Activated CD4-positive, alpha-beta T cell treated with anti-CD3 and anti-CD28 coated beads for 36 hours (primary cell): ENCODE measurements at regions of chr3 and their contacts with region 1.

Region 1: DNA sequence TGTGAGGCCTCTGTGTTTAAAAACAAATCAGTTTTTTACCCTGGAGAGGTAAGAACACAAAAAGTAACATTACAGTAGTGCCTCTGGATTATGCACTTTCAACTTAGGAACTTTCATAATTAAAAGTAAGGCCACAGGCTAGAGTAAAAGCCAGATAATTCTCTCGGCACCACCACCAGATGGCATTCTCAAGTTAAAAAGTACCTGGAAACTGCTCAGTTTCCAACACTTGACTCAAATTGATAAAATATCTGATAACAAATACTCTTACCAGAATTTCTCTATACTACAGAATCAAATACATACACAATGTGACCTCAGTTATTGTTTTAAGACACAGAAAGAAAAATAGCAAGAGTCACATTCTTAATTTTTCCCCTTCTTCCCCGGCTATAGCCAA is 19.9 kb downstream of the SPICE1 start:
- DNase-seq: peak; percentile 52
- ATAC-seq: peak; percentile 66
- H3K4me3 Mint-ChIP-seq: no peak overlapping the region
- H3K27ac Mint-ChIP-seq: no peak overlapping the region
- H3K4me1 Mint-ChIP-seq: no peaks in the 10 kb centered on the region
- H3K27me3 Mint-ChIP-seq: no peaks in the 10 kb centered on the region

Region 2: DNA sequence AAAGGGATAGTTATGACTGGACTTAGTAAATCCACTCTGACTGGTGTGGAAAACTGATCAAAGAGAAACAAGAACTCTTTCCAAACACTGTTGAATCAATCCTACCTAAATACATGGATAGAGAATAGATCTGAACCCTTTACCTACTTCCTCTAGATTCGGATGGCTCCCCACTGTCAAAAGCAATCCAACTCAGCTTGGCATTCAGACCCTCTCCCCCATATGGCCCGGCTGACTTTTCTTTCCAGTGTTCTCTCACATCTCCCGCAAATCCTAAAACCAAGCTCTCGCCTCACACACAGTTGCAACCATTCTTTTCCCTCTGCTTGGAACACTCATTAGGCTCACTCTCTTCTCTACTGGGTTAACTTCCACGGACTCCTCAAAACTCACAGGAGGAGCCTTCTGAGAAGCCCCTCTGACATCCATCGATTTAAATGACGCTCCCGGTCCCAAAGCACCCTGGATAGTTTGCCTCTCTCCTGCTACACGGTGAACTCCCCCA is 19.3 kb after region 1 on chr3:
- CTCF ChIA-PET with region 1: interaction called, 19 read pairs
- POLR2A ChIA-PET with region 1: no interaction called
- intact Hi-C with region 1: no loop called
- DNase-seq: no peak
- ATAC-seq: peak; percentile 30
- H3K4me3 Mint-ChIP-seq: no peak overlapping the region
- H3K27ac Mint-ChIP-seq: no peak overlapping the region
- H3K4me1 Mint-ChIP-seq: peaks cover 10% of the 10 kb centered on the region
- H3K27me3 Mint-ChIP-seq: peaks cover 6% of the 10 kb centered on the region

Region 3: DNA sequence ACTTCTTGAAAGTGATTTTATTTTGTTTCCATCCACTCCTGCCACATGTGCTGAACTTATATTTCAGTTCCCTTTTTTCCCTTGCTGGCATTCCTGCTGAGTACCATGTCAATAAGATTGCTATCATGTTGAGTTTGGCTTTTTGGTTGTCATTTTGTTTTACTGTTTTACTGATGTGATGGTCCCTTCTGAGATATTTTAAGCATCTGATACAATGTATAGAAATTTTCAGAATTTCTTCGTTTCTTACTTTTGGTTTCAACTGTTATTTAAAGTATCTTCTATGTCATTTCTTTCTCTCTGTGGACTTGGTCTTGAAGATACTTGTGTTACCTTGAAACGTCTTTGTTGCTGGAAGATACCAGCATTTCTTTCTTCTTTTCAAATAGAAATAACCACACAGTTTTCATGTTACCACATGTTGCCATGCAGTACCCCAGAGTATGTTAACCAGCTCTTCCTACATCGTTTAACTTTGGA is 51.4 kb after region 1 on chr3:
- CTCF ChIA-PET with region 1: interaction called, 10 read pairs
- POLR2A ChIA-PET with region 1: no interaction called
- intact Hi-C with region 1: no loop called
- DNase-seq: no peak
- ATAC-seq: peak; percentile 47
- H3K4me3 Mint-ChIP-seq: peak overlapping the region; percentile 69
- H3K27ac Mint-ChIP-seq: peak overlapping the region; percentile 82
- H3K4me1 Mint-ChIP-seq: peaks cover 42% of the 10 kb centered on the region
- H3K27me3 Mint-ChIP-seq: no peaks in the 10 kb centered on the region

Region 4: DNA sequence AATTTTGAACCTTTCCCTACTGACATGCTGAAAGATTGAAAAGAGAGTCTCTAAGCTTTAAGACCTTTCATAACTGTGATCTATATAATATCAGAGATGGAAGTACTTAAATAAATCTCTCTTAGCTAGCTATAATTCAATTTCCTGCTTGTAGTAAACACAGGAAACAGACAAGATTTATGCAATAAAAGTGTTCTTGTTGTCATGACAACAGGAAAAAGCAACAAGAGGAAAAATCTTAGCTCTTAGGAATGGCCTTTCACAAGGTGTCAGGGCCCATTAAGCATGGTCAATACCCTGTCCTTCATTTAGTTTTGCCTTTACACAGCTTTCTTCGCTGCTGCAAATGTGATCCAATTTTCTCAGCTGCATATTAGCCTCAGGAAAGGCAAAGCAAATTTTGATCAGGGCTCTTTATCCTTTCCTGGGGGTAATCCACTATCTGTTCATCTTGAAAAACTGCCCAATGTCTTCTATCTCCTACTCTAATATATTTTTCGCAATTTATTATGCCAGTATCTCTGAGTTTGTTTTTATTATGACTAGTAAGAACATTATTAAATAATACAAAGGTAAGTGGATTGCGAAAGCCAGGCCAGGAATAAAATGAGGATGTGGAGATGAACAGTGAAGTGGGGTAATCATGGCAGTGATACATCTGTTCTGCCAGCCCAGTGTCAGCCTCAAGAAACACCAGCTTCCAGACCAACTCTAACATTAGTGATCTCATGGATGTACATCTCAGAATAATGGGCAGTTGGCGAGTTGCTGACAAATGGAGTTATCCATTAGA is 66.0 kb after region 1 on chr3:
- CTCF ChIA-PET with region 1: interaction called, 15 read pairs
- POLR2A ChIA-PET with region 1: no interaction called
- intact Hi-C with region 1: no loop called
- DNase-seq: no peak
- ATAC-seq: no peak
- H3K4me3 Mint-ChIP-seq: no peak overlapping the region
- H3K27ac Mint-ChIP-seq: no peak overlapping the region
- H3K4me1 Mint-ChIP-seq: peaks cover 41% of the 10 kb centered on the region
- H3K27me3 Mint-ChIP-seq: no peaks in the 10 kb centered on the region

Region 5: DNA sequence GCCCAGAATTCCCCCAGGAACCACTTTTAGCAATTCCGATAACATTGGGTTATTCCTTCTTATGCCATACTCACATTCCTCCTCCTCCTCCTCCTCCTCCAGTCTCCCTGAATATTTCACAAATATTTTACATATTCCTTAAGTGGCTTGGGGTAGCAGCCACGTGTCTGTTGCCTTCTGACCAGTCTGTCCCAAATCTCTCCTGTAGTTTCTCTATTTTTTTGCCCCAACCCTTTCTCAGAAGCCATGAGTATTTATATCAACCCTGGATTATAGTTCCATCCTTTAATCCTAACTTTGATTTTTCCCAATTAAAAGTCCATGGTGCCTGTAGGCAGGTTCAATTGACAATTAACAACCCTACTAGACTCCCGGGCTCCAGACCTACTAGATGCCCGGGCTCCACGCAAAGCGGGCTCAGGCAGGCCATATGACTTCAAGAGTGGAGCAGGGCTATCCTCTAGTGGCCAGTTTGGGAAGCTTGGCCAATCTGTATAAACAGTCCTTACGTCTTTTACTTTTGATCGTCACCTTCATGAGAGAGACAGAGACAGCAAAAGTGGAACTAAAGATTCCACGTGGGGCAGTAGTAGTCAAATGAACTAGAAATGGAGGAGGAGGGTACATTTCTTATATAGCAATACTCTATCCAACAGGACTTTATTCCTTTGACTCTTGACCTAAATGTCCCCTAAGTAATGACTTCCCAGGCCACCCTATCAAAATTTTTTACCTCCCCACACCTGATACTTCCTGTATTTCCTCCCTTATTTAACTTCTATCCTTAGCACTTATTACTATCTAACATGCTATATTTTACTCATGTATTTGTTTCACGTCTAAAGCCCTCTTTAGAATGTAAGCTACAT is 131.7 kb after region 1 on chr3:
- CTCF ChIA-PET with region 1: interaction called, 3 read pairs
- POLR2A ChIA-PET with region 1: no interaction called
- intact Hi-C with region 1: loop called in 1 of 2 experiments (anchors 2 kb)
- DNase-seq: peak; percentile 39
- ATAC-seq: peak; percentile 78
- H3K4me3 Mint-ChIP-seq: no peak overlapping the region
- H3K27ac Mint-ChIP-seq: no peak overlapping the region
- H3K4me1 Mint-ChIP-seq: no peaks in the 10 kb centered on the region
- H3K27me3 Mint-ChIP-seq: no peaks in the 10 kb centered on the region